Panc1 (cell line): ENCODE measurements at regions of chr1 and their contacts with region 1.

Region 1: DNA sequence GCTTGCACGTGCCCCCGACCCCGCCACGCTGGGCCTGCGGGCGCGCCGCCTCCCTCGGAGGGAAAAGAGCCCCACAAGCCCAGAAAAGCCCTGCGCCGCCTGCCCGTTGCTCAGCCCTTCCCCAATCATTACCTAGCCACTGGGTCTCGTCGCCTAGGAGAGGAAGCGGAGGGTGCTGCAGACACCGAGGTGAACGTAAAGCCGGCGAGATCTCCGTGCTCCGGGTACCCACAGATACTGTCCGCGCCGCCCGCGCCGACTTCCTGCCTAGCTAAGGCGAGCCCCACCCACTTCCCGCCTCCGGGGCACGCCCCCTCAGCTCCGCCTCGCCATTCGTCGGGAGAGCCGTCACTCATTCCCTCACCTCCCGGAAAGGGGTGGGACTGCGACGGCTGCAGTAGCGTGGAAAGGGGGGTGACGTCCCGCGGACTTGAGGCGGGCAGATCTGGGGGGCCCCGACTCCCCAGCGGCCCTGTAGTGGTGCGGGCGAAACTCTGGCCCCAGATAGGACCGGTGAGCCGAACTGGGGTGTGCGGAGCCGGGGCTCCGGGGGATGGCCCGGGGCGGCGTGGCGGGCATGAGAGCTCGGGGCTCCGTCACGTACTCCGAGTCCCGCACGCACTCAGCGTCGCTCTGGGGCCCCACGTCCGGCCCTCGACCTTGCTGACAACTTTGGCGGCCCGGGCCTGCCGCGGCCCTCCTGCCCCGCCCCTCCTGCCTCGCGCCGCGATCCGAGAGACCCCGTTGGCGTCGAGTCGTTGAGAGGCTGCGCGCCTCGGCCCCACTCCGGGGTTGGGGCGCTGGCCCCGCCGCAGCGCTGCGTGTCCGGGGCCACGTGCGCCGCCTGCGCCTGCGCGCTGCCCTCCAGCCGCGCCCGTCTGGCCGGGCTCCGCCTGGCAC is at the start of gene ENO1:
- DNase-seq: peak; percentile 94
- ATAC-seq: peak; percentile 83
- H3K4me3 ChIP-seq: peak within 1 kb of the TSS; percentile 94 to 97
- H3K27ac ChIP-seq: peak within 1 kb of the TSS; percentile 100
- H3K4me1 ChIP-seq: peaks cover 38% of the 10 kb centered on the region
- H3K27me3 ChIP-seq: no peaks in the 10 kb centered on the region
- CTCF ChIP-seq: no peak
- total RNA-seq, gene ENO1: 2,480 TPM

Region 2: GRCh38 chr1:8752921-8753713 is 125.6 kb before region 1 on chr1:
- CTCF ChIA-PET with region 1: no interaction called
- POLR2A ChIA-PET with region 1: no interaction called
- in situ Hi-C with region 1: no loop called
- intact Hi-C with region 1: no loop called
- DNase-seq: no peak
- ATAC-seq: no peak
- H3K4me3 ChIP-seq: no peak overlapping the region
- H3K27ac ChIP-seq: no peak overlapping the region
- H3K4me1 ChIP-seq: peaks cover 14% of the 10 kb centered on the region; the same call in 1 of the 2 replicates
- H3K27me3 ChIP-seq: no peaks in the 10 kb centered on the region
- CTCF ChIP-seq: no peak

Region 3: DNA sequence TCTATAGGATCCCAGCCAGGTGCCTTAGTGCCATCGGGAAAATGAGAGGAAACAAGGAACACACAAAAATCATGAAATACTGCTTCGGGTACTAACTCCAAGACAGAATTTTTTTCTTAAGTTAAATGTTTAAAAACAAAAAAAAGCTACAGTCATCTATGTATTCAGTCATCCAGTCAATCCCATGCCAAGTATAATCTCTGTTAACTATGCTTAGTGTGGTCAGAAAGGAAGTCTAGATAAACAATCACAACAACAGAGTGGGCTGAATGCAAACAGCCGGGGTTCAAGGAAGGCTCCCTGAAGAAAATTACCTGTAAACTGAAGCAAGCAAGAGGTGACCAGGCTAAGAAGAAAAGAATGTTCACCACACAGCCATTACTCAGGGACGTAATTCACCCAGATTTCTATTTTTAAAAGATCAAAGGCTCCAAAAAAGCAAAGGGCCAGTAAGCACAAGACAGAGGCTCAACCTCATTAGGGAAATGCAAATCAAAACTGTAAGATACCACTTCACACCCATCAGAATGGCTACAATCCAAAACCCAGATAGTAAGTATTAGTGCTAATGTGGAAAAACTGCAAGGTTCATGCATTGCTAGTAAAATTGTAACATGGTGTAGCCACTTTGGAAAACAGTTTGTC is 114.3 kb before region 1 on chr1:
- CTCF ChIA-PET with region 1: no interaction called
- POLR2A ChIA-PET with region 1: interaction called, 12 read pairs
- in situ Hi-C with region 1: no loop called
- intact Hi-C with region 1: no loop called
- DNase-seq: no peak
- ATAC-seq: no peak
- H3K4me3 ChIP-seq: no peak overlapping the region
- H3K27ac ChIP-seq: no peak overlapping the region
- H3K4me1 ChIP-seq: peaks cover 5% of the 10 kb centered on the region; the same call in 1 of the 2 replicates
- H3K27me3 ChIP-seq: no peaks in the 10 kb centered on the region
- CTCF ChIP-seq: no peak

Region 4: GRCh38 chr1:8889925-8890785 is 11.5 kb after region 1 on chr1:
- CTCF ChIA-PET with region 1: no interaction called
- POLR2A ChIA-PET with region 1: interaction called, 13 read pairs
- in situ Hi-C with region 1: no loop called
- intact Hi-C with region 1: no loop called
- DNase-seq: no peak
- ATAC-seq: peak; percentile 94
- H3K4me3 ChIP-seq: peak overlapping the region; percentile 16 to 46
- H3K27ac ChIP-seq: peak overlapping the region; percentile 82
- H3K4me1 ChIP-seq: peaks cover 36% of the 10 kb centered on the region
- H3K27me3 ChIP-seq: no peaks in the 10 kb centered on the region
- CTCF ChIP-seq: no peak

Region 5: DNA sequence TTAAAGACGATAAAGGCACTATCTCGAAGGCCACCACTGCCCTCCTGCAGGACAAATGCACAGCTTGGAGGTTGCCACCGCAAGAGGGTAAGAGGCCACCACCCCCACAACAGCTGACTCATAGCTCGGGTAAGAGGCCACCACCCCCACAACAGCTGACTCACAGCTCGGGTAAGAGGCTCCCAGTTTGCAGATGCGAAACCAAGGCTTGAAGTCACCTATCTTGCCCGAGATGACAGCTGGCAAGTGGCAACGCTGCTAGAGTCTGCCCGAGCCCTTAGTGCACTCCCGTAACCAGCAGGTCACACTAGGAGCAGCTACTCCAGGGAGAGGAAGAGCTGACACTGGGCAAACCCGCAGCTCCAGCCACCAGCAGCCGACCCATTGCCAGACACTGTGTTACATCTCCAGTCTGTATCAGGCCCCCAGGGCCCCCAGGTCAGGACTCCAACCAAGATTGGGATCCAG is 396.9 kb after region 1 on chr1:
- CTCF ChIA-PET with region 1: no interaction called
- POLR2A ChIA-PET with region 1: no interaction called
- in situ Hi-C with region 1: no loop called
- intact Hi-C with region 1: no loop called
- DNase-seq: peak; percentile 85
- ATAC-seq: peak; percentile 92
- H3K4me3 ChIP-seq: peak overlapping the region in 1 of 2 experiments; percentile 26; a peak in 2 of 4 replicates
- H3K27ac ChIP-seq: peak overlapping the region; percentile 93
- H3K4me1 ChIP-seq: peaks cover 46% of the 10 kb centered on the region
- H3K27me3 ChIP-seq: no peaks in the 10 kb centered on the region
- CTCF ChIP-seq: no peak